ENCODE measurements at regions of chr1 and their contacts with region 1.

Region 1: GRCh38 chr1:219010720-219011119 is 163.0 kb upstream of the LYPLAL1 start:
- DNase-seq: no peak
- ATAC-seq: no peak
- H3K4me3 ChIP-seq: no peak overlapping the region
- H3K4me3 Mint-ChIP-seq: no peak overlapping the region
- H3K27ac ChIP-seq: no peak overlapping the region
- H3K27ac Mint-ChIP-seq: no peak overlapping the region
- H3K4me1 ChIP-seq: no peaks in the 10 kb centered on the region
- H3K4me1 Mint-ChIP-seq: no peaks in the 10 kb centered on the region
- H3K27me3 ChIP-seq: no peaks in the 10 kb centered on the region
- H3K27me3 Mint-ChIP-seq: no peaks in the 10 kb centered on the region

Region 2: DNA sequence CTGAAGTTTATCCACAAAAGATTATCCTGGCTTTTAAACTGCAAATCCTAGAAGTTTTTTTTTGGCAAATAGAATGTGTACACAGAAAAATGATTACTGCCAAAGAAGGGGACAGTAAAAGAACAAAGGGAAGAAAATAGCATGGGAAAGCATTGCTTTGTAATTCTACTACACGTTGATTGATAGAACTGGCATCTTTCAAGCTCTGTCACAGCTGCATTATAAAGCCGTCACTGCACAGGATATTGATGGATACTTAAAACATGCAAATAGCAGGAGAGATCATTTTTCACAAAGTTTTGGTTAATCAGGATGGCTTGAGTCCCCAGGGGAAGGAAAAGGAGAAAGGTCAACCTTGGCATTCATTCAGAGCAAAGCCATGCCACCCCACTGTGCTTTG is 909.3 kb before region 1 on chr1:
- CTCF ChIA-PET with region 1: no interaction called
- POLR2A ChIA-PET with region 1: no interaction called
- DNase-seq: no peak
- ATAC-seq: no peak
- H3K4me3 ChIP-seq: no peak overlapping the region
- H3K4me3 Mint-ChIP-seq: no peak overlapping the region
- H3K27ac ChIP-seq: no peak overlapping the region
- H3K27ac Mint-ChIP-seq: no peak overlapping the region
- H3K4me1 ChIP-seq: no peaks in the 10 kb centered on the region
- H3K4me1 Mint-ChIP-seq: no peaks in the 10 kb centered on the region
- H3K27me3 ChIP-seq: no peaks in the 10 kb centered on the region
- H3K27me3 Mint-ChIP-seq: no peaks in the 10 kb centered on the region

Region 3: DNA sequence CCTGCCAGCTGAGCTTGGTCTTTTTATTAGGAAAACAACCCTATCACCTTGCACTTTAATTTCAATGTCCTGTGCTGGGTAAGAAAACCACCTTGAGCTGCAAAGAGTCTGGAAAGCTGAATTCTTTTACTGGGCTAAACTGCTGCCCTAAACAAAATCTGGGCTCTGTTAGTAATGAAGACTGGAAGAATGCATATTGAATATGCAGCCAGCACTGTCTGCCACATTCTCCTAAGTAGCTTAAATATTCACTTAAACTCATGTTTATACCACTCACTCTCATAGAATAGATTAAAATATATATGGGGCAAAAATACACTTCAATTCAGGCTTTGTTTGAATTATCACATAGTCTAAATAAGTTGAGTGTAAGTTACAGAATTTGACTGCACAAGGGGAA is 507.6 kb before region 1 on chr1:
- CTCF ChIA-PET with region 1: no interaction called
- POLR2A ChIA-PET with region 1: interaction called in 1 of 2 experiments, 13 read pairs
- DNase-seq: no peak
- ATAC-seq: no peak
- H3K4me3 ChIP-seq: no peak overlapping the region
- H3K4me3 Mint-ChIP-seq: no peak overlapping the region
- H3K27ac ChIP-seq: no peak overlapping the region
- H3K27ac Mint-ChIP-seq: no peak overlapping the region
- H3K4me1 ChIP-seq: no peaks in the 10 kb centered on the region
- H3K4me1 Mint-ChIP-seq: no peaks in the 10 kb centered on the region
- H3K27me3 ChIP-seq: no peaks in the 10 kb centered on the region
- H3K27me3 Mint-ChIP-seq: peaks cover 4 to 13% of the 10 kb centered on the region in 2 donors

Region 4: DNA sequence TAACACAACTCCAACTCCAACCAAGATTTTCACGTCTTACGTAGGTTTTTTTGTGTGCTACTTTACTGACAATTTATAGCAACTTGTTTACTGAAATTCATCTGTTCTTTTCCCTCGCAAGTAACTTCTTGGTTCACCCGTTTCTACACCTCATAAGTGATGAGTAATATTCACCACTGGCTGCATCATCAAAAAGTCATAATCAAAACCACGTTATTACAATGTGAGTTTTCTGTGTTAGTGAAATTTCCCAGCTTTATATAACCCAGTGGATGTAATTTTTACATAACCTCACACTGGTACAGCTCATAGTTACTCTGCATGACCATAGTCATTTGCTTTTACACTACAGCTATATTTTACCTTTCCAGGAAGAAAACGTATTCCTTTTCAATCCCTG is 238.1 kb before region 1 on chr1:
- CTCF ChIA-PET with region 1: no interaction called
- POLR2A ChIA-PET with region 1: no interaction called
- DNase-seq: no peak
- ATAC-seq: no peak
- H3K4me3 ChIP-seq: no peak overlapping the region
- H3K4me3 Mint-ChIP-seq: no peak overlapping the region
- H3K27ac ChIP-seq: no peak overlapping the region
- H3K27ac Mint-ChIP-seq: no peak overlapping the region
- H3K4me1 ChIP-seq: no peaks in the 10 kb centered on the region
- H3K4me1 Mint-ChIP-seq: no peaks in the 10 kb centered on the region
- H3K27me3 ChIP-seq: no peaks in the 10 kb centered on the region
- H3K27me3 Mint-ChIP-seq: no peaks in the 10 kb centered on the region

Region 5: DNA sequence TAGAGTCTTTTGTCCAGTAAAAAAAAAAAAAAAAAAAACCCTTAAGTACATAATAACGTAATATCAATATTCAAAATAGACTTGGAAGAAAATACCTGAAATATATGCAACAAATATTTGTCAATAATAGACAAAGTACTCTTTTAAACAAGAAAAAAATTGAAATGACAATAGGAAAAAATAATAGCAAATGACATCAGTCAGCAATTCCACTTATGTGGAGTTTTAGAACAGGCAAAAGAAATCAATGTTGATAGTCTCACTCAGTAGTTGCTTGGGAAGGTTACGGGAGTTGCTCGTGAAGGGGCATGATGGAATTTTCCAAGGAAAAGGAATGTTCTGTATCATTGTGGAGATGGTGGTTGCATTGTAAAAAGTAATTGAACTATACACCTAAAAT is 179.9 kb after region 1 on chr1:
- CTCF ChIA-PET with region 1: no interaction called
- POLR2A ChIA-PET with region 1: no interaction called
- DNase-seq: no peak
- ATAC-seq: no peak
- H3K4me3 ChIP-seq: no peak overlapping the region
- H3K4me3 Mint-ChIP-seq: no peak overlapping the region
- H3K27ac ChIP-seq: no peak overlapping the region
- H3K27ac Mint-ChIP-seq: no peak overlapping the region
- H3K4me1 ChIP-seq: no peaks in the 10 kb centered on the region
- H3K4me1 Mint-ChIP-seq: peaks cover 21 to 35% (median 24%) of the 10 kb centered on the region in 3 donors
- H3K27me3 ChIP-seq: no peaks in the 10 kb centered on the region
- H3K27me3 Mint-ChIP-seq: no peaks in the 10 kb centered on the region

Region 6: GRCh38 chr1:219257751-219258150 is 247.0 kb after region 1 on chr1:
- CTCF ChIA-PET with region 1: no interaction called
- POLR2A ChIA-PET with region 1: no interaction called
- DNase-seq: no peak
- ATAC-seq: no peak
- H3K4me3 ChIP-seq: no peak overlapping the region
- H3K4me3 Mint-ChIP-seq: no peak overlapping the region
- H3K27ac ChIP-seq: no peak overlapping the region
- H3K27ac Mint-ChIP-seq: no peak overlapping the region
- H3K4me1 ChIP-seq: no peaks in the 10 kb centered on the region
- H3K4me1 Mint-ChIP-seq: no peaks in the 10 kb centered on the region
- H3K27me3 ChIP-seq: no peaks in the 10 kb centered on the region
- H3K27me3 Mint-ChIP-seq: no peaks in the 10 kb centered on the region

Measured in T-cell (primary cell).